Right cardiac atrium (tissue), 5 donors: ENCODE measurements at regions of chr18 and their contacts with region 1.

Region 1: DNA sequence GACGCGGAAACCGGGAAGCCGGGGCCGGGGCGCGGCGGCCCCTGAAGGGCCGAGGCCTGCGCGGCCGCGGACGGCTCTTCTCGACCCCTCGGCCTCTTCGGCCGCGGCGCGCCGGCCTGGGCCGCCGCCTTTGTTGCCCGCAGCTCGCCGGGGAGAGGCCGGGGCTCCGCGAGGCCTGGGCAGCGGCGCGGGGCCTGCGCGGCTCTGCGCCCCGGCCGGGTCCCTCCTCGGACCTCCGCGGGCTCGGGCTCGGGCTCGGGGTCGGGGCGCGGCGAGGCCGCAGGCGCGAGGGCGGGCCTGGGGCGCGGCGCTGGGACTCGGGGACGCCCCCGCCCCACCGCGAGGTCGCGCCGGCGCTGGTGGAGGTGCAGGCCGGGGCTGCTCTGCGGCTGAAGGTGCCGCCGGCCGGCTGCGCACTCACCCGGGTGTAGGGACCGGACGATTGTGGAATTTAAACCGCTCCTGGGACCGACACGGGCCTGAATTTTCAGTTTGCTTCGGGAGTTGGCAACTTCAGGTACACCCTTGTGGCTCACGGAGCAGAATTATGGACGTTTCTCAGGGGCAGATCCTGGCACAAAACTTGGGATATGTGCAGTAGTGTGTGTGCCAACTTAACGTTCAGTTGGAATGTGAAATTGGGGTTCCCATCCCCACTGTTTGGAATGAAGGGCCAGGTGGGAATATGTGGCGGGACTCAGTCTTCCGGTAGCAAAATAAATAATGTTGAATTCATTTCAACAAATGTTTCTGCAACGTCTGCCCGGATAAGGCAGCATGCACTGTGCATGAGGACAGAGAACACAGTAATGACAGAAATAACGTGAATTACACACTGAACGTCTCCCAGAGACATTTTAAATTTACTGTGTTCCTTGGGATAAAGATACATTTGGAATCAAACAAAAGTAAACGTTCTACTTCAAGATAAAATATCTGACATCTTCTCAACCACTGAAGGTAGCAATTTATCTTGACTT is 796 bp downstream of the SOCS6 start:
- DNase-seq: peak; percentile 38 to 74 (median 73)
- ATAC-seq: peak; percentile 53 to 55
- H3K4me3 ChIP-seq: peak overlapping the region; percentile 99
- H3K27ac ChIP-seq: peak overlapping the region; percentile 76
- H3K4me1 ChIP-seq: peaks cover 10% of the 10 kb centered on the region
- H3K27me3 ChIP-seq: no peaks in the 10 kb centered on the region

Region 2: GRCh38 chr18:70205421-70206397 is 83.9 kb before region 1 on chr18 and contains the start of gene RTTN:
- intact Hi-C with region 1: loop called in 3 of 4 experiments (anchors 10 kb)
- DNase-seq: peak; percentile 96 to 98 (median 98)
- ATAC-seq: peak; percentile 100
- H3K4me3 ChIP-seq: peak within 1 kb of the TSS; percentile 85
- H3K27ac ChIP-seq: peak within 1 kb of the TSS; percentile 98
- H3K4me1 ChIP-seq: no peaks in the 10 kb centered on the region
- H3K27me3 ChIP-seq: no peaks in the 10 kb centered on the region
- total RNA-seq, gene RTTN: 6.6 to 7.9 (median 7.4) TPM